Activated T-helper 1 cell treated with anti-CD3 and anti-CD28 coated beads, Interleukin-12 subunit alpha, Interleukin-12 subunit beta, Interleukin-2, Interleukin-4 antibody, amounts not matched to agents 30 ng/mL and 10 ng/mL and 1 ng/mL, durations not matched to agents 14 hours and 24 hours and 36 hours (primary cell): ENCODE measurements at regions of chr4 and their contacts with region 1.

Region 1: GRCh38 chr4:154551872-154552686 is 1.9 kb upstream of the PLRG1 start:
- DNase-seq: peak; percentile 46
- H3K4me3 Mint-ChIP-seq: no peak overlapping the region
- H3K27ac Mint-ChIP-seq: no peak overlapping the region
- H3K4me1 Mint-ChIP-seq: peaks cover 28% of the 10 kb centered on the region
- H3K27me3 Mint-ChIP-seq: peaks cover 4% of the 10 kb centered on the region

Region 2: DNA sequence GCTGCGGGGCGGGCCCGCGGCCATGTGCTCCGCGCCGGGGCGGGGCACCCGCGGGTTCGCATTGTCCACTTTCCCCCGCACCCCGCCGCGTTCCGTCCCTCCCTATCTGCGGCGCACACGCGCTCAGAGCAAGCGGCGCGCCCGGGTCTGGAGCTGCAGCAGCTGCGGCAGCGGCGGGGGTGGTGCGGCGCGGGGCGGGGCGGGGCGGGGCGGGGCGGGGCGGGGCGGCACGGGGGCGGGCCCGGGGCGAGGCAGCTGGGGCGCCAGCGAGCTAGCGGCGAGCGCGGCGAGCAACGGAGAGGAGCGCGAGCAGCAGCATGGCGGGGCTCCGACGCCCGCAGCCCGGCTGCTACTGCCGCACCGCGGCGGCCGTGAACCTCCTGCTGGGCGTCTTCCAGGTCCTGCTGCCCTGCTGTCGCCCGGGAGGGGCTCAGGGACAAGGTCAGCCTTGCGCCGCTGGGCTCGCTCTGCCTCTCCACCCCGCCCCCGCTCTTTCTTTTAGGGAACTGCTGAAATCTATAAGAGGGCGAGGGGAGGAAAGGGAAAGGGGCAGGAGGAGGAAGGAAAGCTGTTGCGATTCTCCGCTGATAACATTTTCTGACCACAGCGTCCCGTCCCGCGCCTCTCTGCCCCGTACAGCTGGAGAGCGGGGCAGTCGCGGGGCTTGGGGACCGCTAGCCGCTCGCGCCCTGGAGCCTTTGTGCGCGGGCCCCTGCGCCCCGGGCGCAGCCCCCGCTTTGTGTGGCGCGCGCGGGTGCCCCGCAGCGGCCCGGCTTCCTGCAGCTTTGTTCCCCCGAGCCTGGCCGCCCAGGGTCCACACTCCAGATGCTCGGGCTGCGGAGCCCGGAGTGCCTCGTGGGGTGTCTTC is 1085.8 kb before region 1 on chr4 and contains the start of gene TMEM131L:
- intact Hi-C with region 1: loop called (anchors 5 kb)
- DNase-seq: peak; percentile 63
- H3K4me3 Mint-ChIP-seq: peak within 1 kb of the TSS; percentile 89
- H3K27ac Mint-ChIP-seq: peak within 1 kb of the TSS; percentile 90
- H3K4me1 Mint-ChIP-seq: peaks cover 50% of the 10 kb centered on the region
- H3K27me3 Mint-ChIP-seq: no peaks in the 10 kb centered on the region
- total RNA-seq, gene TMEM131L: 39.5 and 42.2 TPM in 2 replicates

Region 3: DNA sequence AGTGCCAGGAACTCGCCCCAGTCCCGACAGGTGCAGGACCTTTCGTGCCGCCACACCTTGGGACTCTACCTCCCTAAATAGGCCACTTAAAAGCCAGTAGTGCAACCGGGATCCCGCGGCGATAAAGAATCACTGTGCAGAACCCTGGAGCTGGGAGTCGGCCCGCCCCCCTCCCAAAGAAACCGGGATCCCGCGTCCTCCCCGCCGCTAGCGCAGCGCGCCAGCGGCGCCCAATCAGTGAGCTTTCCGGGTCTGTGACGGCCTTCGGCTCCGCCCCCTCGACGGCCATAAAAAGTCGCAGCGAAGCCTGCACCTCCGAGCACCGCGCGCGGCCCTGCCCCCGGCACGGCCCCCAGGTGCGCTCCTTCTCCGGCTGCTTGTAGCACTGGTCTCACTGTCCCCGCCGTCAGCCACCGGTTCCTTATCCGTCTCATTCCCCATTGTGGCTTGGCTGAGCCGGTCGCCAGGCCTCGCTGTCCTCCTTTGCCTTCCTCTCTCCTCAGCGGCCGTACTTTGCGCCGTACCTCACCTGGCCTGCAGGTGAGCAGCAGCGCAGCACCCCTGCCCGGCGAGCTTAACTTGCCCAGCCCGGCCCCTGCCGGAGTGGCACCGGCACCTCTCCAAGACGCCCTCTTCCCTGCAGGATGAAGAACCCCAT is 191.7 kb after region 1 on chr4 and contains the start of gene LRAT:
- intact Hi-C with region 1: loop called (anchors 10 kb)
- DNase-seq: peak; percentile 45
- H3K4me3 Mint-ChIP-seq: peak within 1 kb of the TSS; percentile 85
- H3K27ac Mint-ChIP-seq: no peak within 1 kb of the TSS
- H3K4me1 Mint-ChIP-seq: peaks cover 12% of the 10 kb centered on the region
- H3K27me3 Mint-ChIP-seq: peaks cover 63% of the 10 kb centered on the region
- total RNA-seq, gene LRAT: not detected in 2 replicates

Region 4: DNA sequence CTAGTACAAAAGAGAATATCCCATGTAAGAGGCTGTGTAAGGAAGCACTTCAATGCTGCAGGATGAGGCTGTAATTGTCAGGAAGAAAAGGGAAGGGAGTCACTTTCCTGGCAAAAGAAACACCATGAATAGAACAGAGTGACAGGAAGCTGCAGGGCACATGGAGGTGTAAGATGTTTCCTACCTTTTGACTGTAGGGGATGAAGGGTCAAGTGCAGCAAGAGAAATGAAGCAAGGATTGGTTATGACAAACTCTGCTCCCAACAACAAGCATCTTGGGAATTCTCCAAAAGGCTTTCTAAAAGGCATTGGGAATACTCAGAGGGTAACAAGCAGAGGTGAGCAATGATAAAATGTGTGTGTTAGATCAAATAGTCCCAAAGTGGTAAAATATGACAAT is 582.1 kb after region 1 on chr4:
- intact Hi-C with region 1: no loop called
- DNase-seq: no peak
- H3K4me3 Mint-ChIP-seq: no peak overlapping the region
- H3K27ac Mint-ChIP-seq: no peak overlapping the region
- H3K4me1 Mint-ChIP-seq: no peaks in the 10 kb centered on the region
- H3K27me3 Mint-ChIP-seq: peaks cover 2% of the 10 kb centered on the region

Region 5: DNA sequence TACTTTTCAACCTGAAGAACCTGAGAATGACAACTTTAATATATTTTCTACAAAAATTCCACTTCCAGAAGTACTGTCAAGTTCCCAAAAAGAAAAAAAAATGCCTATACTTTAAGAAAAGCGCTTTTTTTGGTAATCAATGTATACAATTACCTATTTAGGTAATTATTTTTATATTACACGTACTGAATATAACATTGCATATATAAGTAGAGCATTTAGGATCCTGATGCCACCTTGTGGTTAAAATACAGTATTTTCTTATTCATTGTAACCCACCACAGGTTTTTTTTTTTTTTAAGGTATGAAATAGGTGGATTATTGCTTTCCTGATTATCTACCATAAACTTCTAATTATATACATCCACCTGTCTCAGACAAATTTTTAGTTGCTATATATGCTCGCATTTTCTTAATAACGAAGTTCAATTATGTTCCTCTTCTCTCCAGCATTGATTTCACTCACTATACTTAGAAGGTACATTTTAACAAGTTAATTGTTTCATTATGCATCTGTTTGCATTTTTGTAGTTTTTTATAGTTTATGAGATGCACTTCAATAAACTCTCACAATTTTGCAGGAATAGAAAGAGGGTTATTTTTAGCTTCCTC is 819.5 kb after region 1 on chr4:
- intact Hi-C with region 1: loop called (anchors 1 kb)
- DNase-seq: no peak
- H3K4me3 Mint-ChIP-seq: no peak overlapping the region
- H3K27ac Mint-ChIP-seq: no peak overlapping the region
- H3K4me1 Mint-ChIP-seq: peaks cover 13% of the 10 kb centered on the region
- H3K27me3 Mint-ChIP-seq: no peaks in the 10 kb centered on the region

Region 6: DNA sequence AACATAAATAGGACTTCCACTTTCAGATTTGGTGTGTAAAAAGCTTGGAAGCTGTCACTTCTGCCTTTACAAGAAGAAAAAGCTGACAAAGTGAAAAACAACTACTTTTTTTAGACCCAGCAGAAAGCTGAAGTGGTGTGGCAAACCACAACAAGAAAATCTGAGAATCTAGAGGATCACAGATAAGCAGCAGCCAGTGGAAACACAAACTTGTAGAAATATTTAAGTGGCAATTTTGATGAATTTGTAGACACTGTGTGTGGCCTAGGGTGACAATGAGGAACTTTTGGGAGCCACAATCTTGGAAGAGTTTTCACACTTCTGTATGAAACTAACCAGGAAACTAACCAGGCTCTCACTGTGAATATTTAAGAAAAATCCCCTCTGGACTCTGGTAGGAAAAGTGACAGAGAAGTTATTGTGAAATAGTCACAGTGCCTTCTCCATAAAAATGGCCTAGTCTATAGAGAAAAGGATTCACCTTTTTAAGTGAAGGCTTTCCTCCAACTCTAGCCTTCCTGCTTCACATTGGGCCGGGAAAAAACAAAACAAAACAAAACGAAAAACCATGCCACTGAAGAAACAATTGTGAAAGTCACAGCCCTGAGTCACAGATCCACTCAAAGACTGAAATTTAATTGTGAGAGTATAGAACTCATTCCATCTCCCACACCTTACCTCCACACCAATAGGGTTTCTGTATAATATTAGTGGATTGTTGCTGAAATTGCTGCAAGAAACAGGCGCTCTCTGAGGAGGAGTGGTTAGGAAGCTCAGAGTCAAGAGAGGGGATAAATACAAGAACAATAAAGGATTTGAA is 1087.8 kb after region 1 on chr4:
- intact Hi-C with region 1: loop called (anchors 10 kb)
- DNase-seq: peak; percentile 6
- H3K4me3 Mint-ChIP-seq: peak overlapping the region; percentile 50
- H3K27ac Mint-ChIP-seq: peak overlapping the region; percentile 79
- H3K4me1 Mint-ChIP-seq: peaks cover 21% of the 10 kb centered on the region
- H3K27me3 Mint-ChIP-seq: peaks cover 5% of the 10 kb centered on the region